Activated CD8-positive, alpha-beta T cell treated with anti-CD3 and anti-CD28 coated beads for 36 hours (primary cell): ENCODE measurements at regions of chr6 and their contacts with region 1.

Region 1: DNA sequence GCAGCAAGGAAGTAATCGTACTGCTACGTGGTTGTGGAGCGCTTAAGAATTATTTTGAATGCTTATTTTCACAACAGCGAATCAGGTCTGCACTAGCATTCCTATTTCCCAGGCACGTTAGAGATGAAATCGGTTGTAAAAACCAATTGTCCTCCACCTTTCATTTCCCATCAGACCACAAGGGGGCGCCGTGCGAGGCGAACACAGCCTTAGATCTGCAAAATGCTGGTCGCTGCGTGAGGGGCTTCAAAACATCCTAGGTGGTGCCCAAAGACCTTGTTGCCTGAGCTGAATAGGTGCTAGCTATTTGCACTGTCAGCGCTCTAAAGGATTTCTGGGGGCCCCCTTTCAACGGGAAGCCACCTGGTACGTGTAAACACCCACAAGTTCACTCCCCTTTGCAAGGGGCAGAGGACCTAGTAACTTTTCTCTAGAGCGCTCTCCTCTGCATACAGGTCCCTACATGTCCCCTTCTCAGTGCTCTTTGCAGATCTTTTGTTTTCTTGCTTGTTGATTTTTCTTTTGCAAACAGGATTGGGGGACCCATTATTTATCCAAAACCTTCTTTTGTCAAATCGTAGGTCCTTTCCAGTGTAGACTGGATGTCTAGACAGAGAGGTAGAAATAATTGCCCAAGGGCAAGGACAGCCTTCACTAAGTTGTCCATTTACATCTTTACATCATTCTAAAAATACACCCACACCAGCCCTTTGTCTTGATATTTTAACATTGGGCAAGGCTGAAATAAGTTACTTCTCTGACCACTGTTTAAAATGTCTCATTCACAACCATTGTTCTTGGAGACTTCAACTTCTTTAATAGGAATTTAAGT is 59.8 kb downstream of the NEDD9 start:
- DNase-seq: peak; percentile 88
- ATAC-seq: peak; percentile 76
- H3K4me3 Mint-ChIP-seq: no peak overlapping the region
- H3K27ac Mint-ChIP-seq: no peak overlapping the region
- H3K4me1 Mint-ChIP-seq: peaks cover 17% of the 10 kb centered on the region
- H3K27me3 Mint-ChIP-seq: no peaks in the 10 kb centered on the region
- CTCF ChIP-seq: peak; percentile 94

Region 2: GRCh38 chr6:11144393-11144851 is 28.3 kb before region 1 on chr6:
- CTCF ChIA-PET with region 1: interaction called, 12 read pairs
- POLR2A ChIA-PET with region 1: interaction called, 4 read pairs
- intact Hi-C with region 1: no loop called
- DNase-seq: peak; percentile 87
- ATAC-seq: peak; percentile 96
- H3K4me3 Mint-ChIP-seq: no peak overlapping the region
- H3K27ac Mint-ChIP-seq: no peak overlapping the region
- H3K4me1 Mint-ChIP-seq: peaks cover 11% of the 10 kb centered on the region
- H3K27me3 Mint-ChIP-seq: no peaks in the 10 kb centered on the region
- CTCF ChIP-seq: peak; percentile 85

Region 3: GRCh38 chr6:11161031-11161966 is 11.4 kb before region 1 on chr6:
- CTCF ChIA-PET with region 1: interaction called, 10 read pairs
- POLR2A ChIA-PET with region 1: no interaction called
- intact Hi-C with region 1: no loop called
- DNase-seq: no peak
- ATAC-seq: no peak
- H3K4me3 Mint-ChIP-seq: no peak overlapping the region
- H3K27ac Mint-ChIP-seq: no peak overlapping the region
- H3K4me1 Mint-ChIP-seq: peaks cover 18% of the 10 kb centered on the region
- H3K27me3 Mint-ChIP-seq: no peaks in the 10 kb centered on the region
- CTCF ChIP-seq: no peak

Region 4: GRCh38 chr6:11232193-11232769 is 59.6 kb after region 1 on chr6 and contains the start of gene NEDD9:
- CTCF ChIA-PET with region 1: interaction called, 12 read pairs
- POLR2A ChIA-PET with region 1: no interaction called
- intact Hi-C with region 1: no loop called
- DNase-seq: peak; percentile 98
- ATAC-seq: peak; percentile 96
- H3K4me3 Mint-ChIP-seq: peak within 1 kb of the TSS; percentile 84
- H3K27ac Mint-ChIP-seq: peak within 1 kb of the TSS; percentile 99
- H3K4me1 Mint-ChIP-seq: peaks cover 60% of the 10 kb centered on the region
- H3K27me3 Mint-ChIP-seq: no peaks in the 10 kb centered on the region
- CTCF ChIP-seq: no peak
- total RNA-seq, gene NEDD9: 26.6 to 29.7 TPM

Region 5: GRCh38 chr6:11262242-11262641 is 89.5 kb after region 1 on chr6:
- CTCF ChIA-PET with region 1: interaction called, 13 read pairs
- POLR2A ChIA-PET with region 1: no interaction called
- intact Hi-C with region 1: no loop called
- DNase-seq: no peak
- ATAC-seq: no peak
- H3K4me3 Mint-ChIP-seq: no peak overlapping the region
- H3K27ac Mint-ChIP-seq: no peak overlapping the region
- H3K4me1 Mint-ChIP-seq: peaks cover 64% of the 10 kb centered on the region
- H3K27me3 Mint-ChIP-seq: no peaks in the 10 kb centered on the region
- CTCF ChIP-seq: no peak

Region 6: GRCh38 chr6:11277275-11278206 is 104.8 kb after region 1 on chr6:
- CTCF ChIA-PET with region 1: interaction called, 11 read pairs
- POLR2A ChIA-PET with region 1: no interaction called
- intact Hi-C with region 1: no loop called
- DNase-seq: peak; percentile 48
- ATAC-seq: peak; percentile 65
- H3K4me3 Mint-ChIP-seq: peak overlapping the region; percentile 39
- H3K27ac Mint-ChIP-seq: peak overlapping the region; percentile 88
- H3K4me1 Mint-ChIP-seq: peaks cover 45% of the 10 kb centered on the region
- H3K27me3 Mint-ChIP-seq: no peaks in the 10 kb centered on the region
- CTCF ChIP-seq: no peak

Region 7: DNA sequence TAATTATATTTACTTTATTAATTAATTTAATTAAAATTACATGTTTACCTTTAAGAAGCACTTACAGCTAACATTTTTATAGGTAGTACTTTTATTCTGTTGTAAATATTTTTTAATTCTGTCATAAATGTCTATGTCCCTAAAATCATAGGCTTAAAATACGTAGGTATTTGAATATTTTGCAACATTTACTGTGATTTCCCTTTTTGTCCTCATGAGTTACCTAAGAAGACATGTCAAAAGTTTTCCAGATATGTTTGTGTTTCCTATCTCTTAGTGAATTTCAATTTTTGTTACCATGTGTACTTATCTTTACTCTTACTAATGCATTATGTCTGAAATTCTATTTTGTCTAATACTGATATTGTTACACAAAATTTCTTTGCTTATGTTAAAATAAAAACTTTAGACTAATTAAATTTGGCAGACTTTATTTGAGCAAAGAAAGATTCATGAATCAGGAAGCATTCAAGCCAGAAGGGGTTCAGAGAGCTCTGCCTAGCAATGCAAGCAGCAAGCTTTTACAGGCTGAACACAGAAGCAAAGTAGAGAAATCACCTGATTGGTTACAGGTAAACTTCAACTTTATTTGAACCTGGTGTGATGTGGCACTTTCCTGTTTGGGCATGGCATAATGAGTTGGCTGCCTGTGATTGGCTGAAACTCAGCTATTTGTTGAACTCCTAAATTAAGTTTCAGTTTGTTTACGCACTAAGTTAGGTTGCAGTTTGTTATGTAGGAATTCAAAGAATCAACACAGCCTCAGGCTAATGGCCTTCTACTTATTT is 241.7 kb after region 1 on chr6:
- CTCF ChIA-PET with region 1: interaction called, 4 read pairs
- POLR2A ChIA-PET with region 1: no interaction called
- intact Hi-C with region 1: loop called (anchors 10 kb)
- DNase-seq: peak; percentile 61
- ATAC-seq: peak; percentile 25
- H3K4me3 Mint-ChIP-seq: no peak overlapping the region
- H3K27ac Mint-ChIP-seq: no peak overlapping the region
- H3K4me1 Mint-ChIP-seq: peaks cover 40% of the 10 kb centered on the region
- H3K27me3 Mint-ChIP-seq: no peaks in the 10 kb centered on the region
- CTCF ChIP-seq: no peak